H1 (cell line): ENCODE measurements at regions of chr6 and their contacts with region 1.

Region 1: GRCh38 chr6:33513213-33513612 is 58.8 kb downstream of the ZBTB9 start:
- DNase-seq: no peak
- H3K4me3 ChIP-seq: no peak overlapping the region
- H3K27ac ChIP-seq: no peak overlapping the region
- H3K4me1 ChIP-seq: peaks cover 0 to 8% (median 1%) of the 10 kb centered on the region in 4 experiments; a peak in 2 of 7 replicates
- H3K27me3 ChIP-seq: peaks cover 0 to 2% (median 0%) of the 10 kb centered on the region in 4 experiments; a peak in 2 of 7 replicates
- CTCF ChIP-seq: no peak
- EP300 ChIP-seq: no peak
- POLR2A ChIP-seq: no peak
- RAD21 ChIP-seq: no peak

Region 2: DNA sequence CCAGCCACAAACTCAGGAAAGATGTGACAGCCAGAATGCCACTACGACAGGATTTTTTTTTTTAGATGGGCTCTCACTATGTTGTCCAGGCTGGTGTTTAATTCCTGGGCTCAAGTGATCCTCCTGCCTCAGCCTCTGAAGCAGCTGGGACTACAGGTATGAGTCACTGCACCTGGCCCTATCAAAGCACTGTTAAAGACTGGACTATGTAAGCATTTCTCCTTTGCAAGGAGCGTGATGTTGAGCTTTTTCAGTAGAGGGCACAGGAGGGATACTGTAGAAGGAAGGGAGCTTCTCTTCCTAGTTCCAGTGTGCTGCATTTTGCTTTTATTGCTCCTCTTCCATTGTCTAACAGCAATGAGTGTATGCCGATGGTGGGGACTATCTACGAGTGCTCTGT is 23.0 kb before region 1 on chr6:
- CTCF ChIA-PET with region 1: interaction called, 13 read pairs
- POLR2A ChIA-PET with region 1: no interaction called
- DNase-seq: no peak
- H3K4me3 ChIP-seq: no peak overlapping the region
- H3K27ac ChIP-seq: no peak overlapping the region
- H3K4me1 ChIP-seq: peaks cover 0 to 3% (median 1%) of the 10 kb centered on the region in 4 experiments; a peak in 2 of 7 replicates
- H3K27me3 ChIP-seq: no peaks in the 10 kb centered on the region
- CTCF ChIP-seq: peak in 1 of 3 experiments; percentile 18; a peak in 1 of 4 replicates
- EP300 ChIP-seq: no peak
- POLR2A ChIP-seq: no peak
- RAD21 ChIP-seq: peak; percentile 2 to 16; a peak in 1 of 4 replicates

Region 3: GRCh38 chr6:33497157-33497556 is 16.1 kb before region 1 on chr6:
- CTCF ChIA-PET with region 1: interaction called, 18 read pairs
- POLR2A ChIA-PET with region 1: interaction called, 3 read pairs
- DNase-seq: no peak
- H3K4me3 ChIP-seq: no peak overlapping the region
- H3K27ac ChIP-seq: no peak overlapping the region
- H3K4me1 ChIP-seq: no peaks in the 10 kb centered on the region
- H3K27me3 ChIP-seq: no peaks in the 10 kb centered on the region
- CTCF ChIP-seq: peak in 1 of 3 experiments; percentile 13; a peak in 1 of 4 replicates
- EP300 ChIP-seq: no peak
- POLR2A ChIP-seq: no peak
- RAD21 ChIP-seq: no peak

Region 4: GRCh38 chr6:34447910-34448309 is 934.7 kb after region 1 on chr6:
- CTCF ChIA-PET with region 1: no interaction called
- POLR2A ChIA-PET with region 1: no interaction called
- DNase-seq: peak in 1 of 2 experiments; percentile 75
- H3K4me3 ChIP-seq: no peak overlapping the region
- H3K27ac ChIP-seq: no peak overlapping the region
- H3K4me1 ChIP-seq: peaks cover 0 to 5% (median 0%) of the 10 kb centered on the region in 4 experiments; a peak in 2 of 7 replicates
- H3K27me3 ChIP-seq: no peaks in the 10 kb centered on the region
- CTCF ChIP-seq: no peak
- EP300 ChIP-seq: no peak
- POLR2A ChIP-seq: no peak
- RAD21 ChIP-seq: no peak